Aorta (tissue), 5 donors: ENCODE measurements at regions of chr15 and their contacts with region 1.

Region 1: DNA sequence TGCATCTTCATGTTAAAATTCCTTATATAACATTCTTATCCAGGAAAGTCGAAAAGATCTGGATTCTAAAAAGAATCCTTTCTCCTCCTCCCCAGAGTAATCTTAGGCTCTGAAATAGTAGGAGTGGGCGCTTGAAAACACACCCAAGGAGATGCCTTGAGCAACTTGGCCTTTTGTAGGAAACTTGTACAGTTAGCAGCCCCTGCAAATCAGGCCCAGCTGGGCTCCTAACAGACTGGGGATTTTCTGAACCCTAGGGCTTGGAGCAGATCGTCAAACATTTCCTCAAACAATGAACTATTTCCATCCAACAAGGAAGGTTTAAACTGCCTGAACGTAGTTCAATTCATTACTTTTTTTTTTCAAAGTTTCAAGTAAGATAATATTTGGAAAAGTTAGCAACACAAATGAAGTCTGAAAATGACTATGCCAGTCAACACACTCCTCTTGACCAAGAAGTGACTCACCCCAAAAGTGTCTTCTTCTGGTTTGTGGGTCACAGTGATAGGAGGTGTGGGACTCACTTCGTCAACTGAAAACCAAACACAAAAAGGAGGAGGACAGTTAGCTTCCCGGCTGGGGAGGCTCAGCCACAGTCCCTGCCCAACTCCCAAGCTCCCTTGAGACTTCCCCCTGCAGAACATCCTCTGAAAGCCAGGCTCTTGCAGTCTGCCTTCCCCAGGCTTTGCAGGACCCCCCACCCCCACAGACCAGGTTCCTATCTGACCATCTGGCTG is 129.7 kb downstream of the NTRK3 start:
- DNase-seq: no peak
- ATAC-seq: no peak
- H3K4me3 ChIP-seq: no peak overlapping the region
- H3K27ac ChIP-seq: peak overlapping the region in 1 of 2 donors; percentile 1
- H3K4me1 ChIP-seq: peaks cover 4 to 22% of the 10 kb centered on the region in 2 donors
- H3K27me3 ChIP-seq: no peaks in the 10 kb centered on the region

Region 2: DNA sequence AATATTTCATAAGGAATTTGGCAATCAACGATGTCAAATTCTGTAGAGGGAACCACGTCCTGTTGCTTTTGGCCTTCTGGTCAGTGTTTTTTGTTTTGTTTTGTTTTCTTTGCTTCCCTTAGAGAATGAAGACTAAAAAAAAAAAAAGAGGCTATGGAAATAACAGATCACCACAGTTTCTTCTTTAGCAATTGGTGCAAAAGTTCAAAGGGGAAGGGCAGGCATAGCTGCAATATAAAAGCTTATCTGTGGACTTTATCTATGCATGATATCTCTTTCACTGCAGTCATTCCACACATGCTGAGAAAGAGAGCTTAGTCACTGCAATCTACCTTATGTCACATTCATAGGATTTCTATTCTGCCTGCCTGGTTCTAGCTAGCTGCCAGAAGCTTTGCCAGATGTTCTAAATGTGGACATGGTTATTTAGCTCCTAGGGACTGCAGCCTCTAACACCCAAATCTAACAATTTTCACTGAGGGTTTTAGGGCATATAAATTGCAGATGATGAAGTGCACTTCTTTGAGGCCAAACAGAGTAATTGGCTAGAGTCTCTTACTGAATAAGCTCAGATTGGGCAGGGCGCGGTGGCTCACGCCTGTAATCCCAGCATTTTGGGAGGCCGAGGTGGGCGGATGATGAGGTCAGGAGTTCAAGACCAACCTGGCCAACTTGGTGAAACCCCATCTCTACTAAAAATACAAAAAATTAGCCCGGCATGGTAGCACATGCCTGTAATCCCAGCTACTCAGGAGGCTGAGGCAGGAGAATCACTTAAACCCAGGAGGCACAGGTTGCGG is 507.5 kb before region 1 on chr15:
- intact Hi-C with region 1: loop called in 1 of 2 experiments (anchors 10 kb)
- DNase-seq: no peak
- ATAC-seq: peak; percentile 88
- H3K4me3 ChIP-seq: no peak overlapping the region
- H3K27ac ChIP-seq: peak overlapping the region; percentile 51 to 86
- H3K4me1 ChIP-seq: peaks cover 2 to 8% of the 10 kb centered on the region in 2 donors
- H3K27me3 ChIP-seq: no peaks in the 10 kb centered on the region

Region 3: GRCh38 chr15:88066713-88067685 is 59.9 kb before region 1 on chr15:
- intact Hi-C with region 1: no loop called
- DNase-seq: no peak
- ATAC-seq: no peak
- H3K4me3 ChIP-seq: no peak overlapping the region
- H3K27ac ChIP-seq: no peak overlapping the region
- H3K4me1 ChIP-seq: no peaks in the 10 kb centered on the region
- H3K27me3 ChIP-seq: no peaks in the 10 kb centered on the region

Region 4: GRCh38 chr15:88166082-88166993 is 39.5 kb after region 1 on chr15:
- intact Hi-C with region 1: no loop called
- DNase-seq: peak in 1 of 2 donors; percentile 85
- ATAC-seq: peak; percentile 51
- H3K4me3 ChIP-seq: no peak overlapping the region
- H3K27ac ChIP-seq: no peak overlapping the region
- H3K4me1 ChIP-seq: no peaks in the 10 kb centered on the region
- H3K27me3 ChIP-seq: no peaks in the 10 kb centered on the region

Region 5: GRCh38 chr15:88218550-88219221 is 91.8 kb after region 1 on chr15:
- intact Hi-C with region 1: no loop called
- DNase-seq: peak in 1 of 2 donors; percentile 29
- ATAC-seq: no peak
- H3K4me3 ChIP-seq: no peak overlapping the region
- H3K27ac ChIP-seq: no peak overlapping the region
- H3K4me1 ChIP-seq: peaks cover 0 to 5% of the 10 kb centered on the region in 2 donors
- H3K27me3 ChIP-seq: no peaks in the 10 kb centered on the region